K562 (cell line): ENCODE measurements at regions of chr6 and their contacts with region 1.

Region 1: GRCh38 chr6:112956696-112957528 is 609.8 kb downstream of the RFPL4B start:
- DNase-seq: peak; percentile 37 to 90 (median 62)
- ATAC-seq: peak; percentile 94
- H3K4me3 ChIP-seq: no peak overlapping the region
- H3K27ac ChIP-seq: peak overlapping the region; percentile 91
- H3K4me1 ChIP-seq: peaks cover 8 to 13% of the 10 kb centered on the region in 2 experiments; a peak in 3 of 5 replicates
- H3K27me3 ChIP-seq: no peaks in the 10 kb centered on the region
- CTCF ChIP-seq: no peak
- EP300 ChIP-seq: peak; percentile 92
- POLR2A ChIP-seq: no peak
- RAD21 ChIP-seq: 0 out of 4 replicates have a peak, but pooled peaks of 1 of the 2 experiments have one; percentile 4

Region 2: GRCh38 chr6:112743323-112743722 is 213.6 kb before region 1 on chr6:
- CTCF ChIA-PET with region 1: no interaction called
- POLR2A ChIA-PET with region 1: no interaction called
- in situ Hi-C with region 1: no loop called
- intact Hi-C with region 1: no loop called
- DNase-seq: no peak
- ATAC-seq: no peak
- H3K4me3 ChIP-seq: no peak overlapping the region
- H3K27ac ChIP-seq: no peak overlapping the region
- H3K4me1 ChIP-seq: no peaks in the 10 kb centered on the region
- H3K27me3 ChIP-seq: no peaks in the 10 kb centered on the region
- CTCF ChIP-seq: no peak
- EP300 ChIP-seq: no peak
- POLR2A ChIP-seq: no peak
- RAD21 ChIP-seq: no peak

Region 3: DNA sequence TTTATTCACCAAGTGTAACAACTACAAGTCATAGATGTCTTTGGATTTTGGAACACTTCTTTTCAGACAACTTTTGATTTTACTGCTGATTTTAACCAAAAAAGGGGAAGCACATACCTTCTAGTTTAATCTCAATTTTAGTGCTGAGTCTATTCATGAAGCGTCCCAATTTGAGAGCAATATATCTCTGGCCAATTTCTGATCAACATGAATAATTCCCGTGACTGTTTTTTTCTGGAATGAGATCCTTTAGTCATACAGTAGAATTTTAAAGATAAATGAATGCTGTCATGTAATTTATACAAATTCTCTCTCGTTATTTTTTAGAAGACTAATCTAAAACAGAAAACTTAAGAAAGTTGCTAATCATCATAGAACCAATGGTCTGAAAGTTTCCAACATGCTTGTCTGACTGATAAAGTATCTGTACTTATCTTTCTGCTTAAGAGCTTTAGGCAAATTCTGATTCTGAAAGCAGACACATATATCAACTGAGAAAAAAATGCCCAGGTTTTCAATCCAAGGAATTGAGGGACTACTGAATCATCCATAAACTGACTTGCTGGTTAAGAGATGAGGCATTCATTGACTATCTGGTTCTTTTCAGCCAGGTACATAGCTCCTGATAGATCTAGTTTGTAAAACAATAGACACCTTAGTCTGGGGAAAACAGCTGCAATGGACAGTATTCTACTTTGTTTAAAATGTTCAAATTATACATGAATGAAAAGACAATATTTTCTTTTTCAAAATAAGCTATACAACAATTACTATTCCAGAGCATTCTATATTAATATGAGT is 47.8 kb after region 1 on chr6:
- CTCF ChIA-PET with region 1: no interaction called
- POLR2A ChIA-PET with region 1: no interaction called
- in situ Hi-C with region 1: no loop called
- intact Hi-C with region 1: loop called (anchors 5 kb)
- DNase-seq: no peak
- ATAC-seq: no peak
- H3K4me3 ChIP-seq: no peak overlapping the region
- H3K27ac ChIP-seq: no peak overlapping the region
- H3K4me1 ChIP-seq: no peaks in the 10 kb centered on the region
- H3K27me3 ChIP-seq: no peaks in the 10 kb centered on the region
- CTCF ChIP-seq: no peak
- EP300 ChIP-seq: no peak
- POLR2A ChIP-seq: no peak
- RAD21 ChIP-seq: no peak